Activated CD8-positive, alpha-beta T cell treated with anti-CD3 and anti-CD28 coated beads, Interleukin-2, amount 10 ng/mL, durations not matched to agents 7 days and 5 days (primary cell): ENCODE measurements at regions of chr19 and their contacts with region 1.

Region 1: GRCh38 chr19:45478454-45479238 is 10.8 kb downstream of the FOSB start:
- DNase-seq: peak; percentile 94
- ATAC-seq: peak; percentile 59
- H3K4me3 Mint-ChIP-seq: peak overlapping the region; percentile 53
- H3K27ac Mint-ChIP-seq: peak overlapping the region; percentile 96
- H3K4me1 Mint-ChIP-seq: peaks cover 34% of the 10 kb centered on the region
- H3K27me3 Mint-ChIP-seq: peaks cover 17% of the 10 kb centered on the region

Region 2: DNA sequence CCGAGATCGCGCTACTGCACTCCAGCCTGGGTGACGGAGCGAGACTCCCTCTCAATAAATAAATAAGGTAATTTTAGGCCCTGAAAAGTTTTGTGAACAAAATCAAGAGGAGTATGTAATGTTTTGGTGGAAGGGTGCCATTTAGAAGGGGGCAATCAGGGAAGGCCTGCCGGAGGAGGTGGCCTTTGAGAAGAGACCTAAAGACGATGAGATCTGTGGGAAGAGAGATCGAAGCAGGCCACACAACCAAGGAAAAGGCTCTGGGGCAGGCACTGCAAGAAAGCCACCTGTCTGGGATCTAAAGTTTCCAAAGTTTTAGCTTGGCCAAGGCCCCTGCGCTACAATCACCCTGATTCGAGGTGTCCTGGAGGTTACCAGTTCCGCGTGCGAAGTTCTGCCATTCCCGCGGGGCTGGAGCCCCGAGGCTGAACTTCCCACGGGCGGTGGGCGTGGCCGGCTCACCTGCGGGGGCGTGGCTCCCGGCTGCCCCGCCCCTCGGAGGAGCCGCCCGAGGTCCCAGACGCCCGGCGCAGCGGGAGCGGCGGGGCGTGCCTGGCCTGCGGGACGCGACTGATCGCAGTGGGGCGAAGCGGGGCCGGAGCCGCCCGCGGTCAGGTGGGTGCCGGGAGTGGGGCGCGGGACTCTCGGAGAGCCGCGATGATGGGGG is 138.3 kb before region 1 on chr19 and contains the start of gene KLC3:
- CTCF ChIA-PET with region 1: no interaction called
- POLR2A ChIA-PET with region 1: no interaction called
- DNase-seq: no peak
- ATAC-seq: peak; percentile 58
- H3K4me3 Mint-ChIP-seq: peak within 1 kb of the TSS; percentile 48
- H3K27ac Mint-ChIP-seq: no peak within 1 kb of the TSS
- H3K4me1 Mint-ChIP-seq: peaks cover 10% of the 10 kb centered on the region
- H3K27me3 Mint-ChIP-seq: peaks cover 13% of the 10 kb centered on the region
- total RNA-seq, gene KLC3: not detected

Region 3: DNA sequence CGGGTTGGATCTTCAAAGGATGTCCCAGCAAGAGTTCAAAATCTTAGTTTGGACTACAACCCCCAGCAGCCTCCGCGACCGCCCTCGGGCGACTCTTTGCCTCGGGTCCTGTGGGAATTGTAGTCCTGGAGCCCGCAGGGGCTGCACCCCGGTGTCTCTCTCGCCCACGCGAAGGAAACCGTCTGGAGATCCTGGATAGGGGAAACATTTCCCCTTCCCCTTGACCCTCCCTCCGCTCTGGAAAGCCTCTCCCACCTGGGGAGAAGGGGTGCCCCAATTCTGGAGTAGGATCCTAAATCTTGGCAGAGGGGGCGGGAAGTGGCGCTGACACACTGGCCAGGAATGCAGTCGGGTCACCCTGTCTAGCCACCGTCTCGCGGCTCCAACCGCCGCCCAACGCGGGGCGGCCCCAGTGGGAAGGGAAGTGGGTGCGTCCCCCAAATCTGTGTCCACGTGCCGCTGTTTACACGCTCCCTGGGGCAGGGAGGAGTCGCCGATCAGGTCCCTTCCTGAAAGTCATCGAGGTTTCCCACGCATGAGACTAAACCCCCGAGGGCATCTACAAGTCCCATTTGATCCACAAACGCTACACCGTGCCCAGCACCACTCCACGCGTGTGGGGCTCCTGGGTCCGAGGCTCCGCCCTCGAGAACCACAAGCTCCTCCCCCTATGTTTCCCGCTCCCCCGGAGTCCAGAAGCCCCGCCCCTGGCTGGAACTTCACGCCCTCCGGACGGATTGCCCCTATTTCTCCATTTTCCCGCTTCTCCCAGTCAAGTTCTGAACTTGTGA is 73.0 kb before region 1 on chr19:
- CTCF ChIA-PET with region 1: interaction called, 64 read pairs
- POLR2A ChIA-PET with region 1: interaction called, 4 read pairs
- DNase-seq: peak; percentile 90
- ATAC-seq: peak; percentile 59
- H3K4me3 Mint-ChIP-seq: peak overlapping the region; percentile 96
- H3K27ac Mint-ChIP-seq: peak overlapping the region; percentile 93
- H3K4me1 Mint-ChIP-seq: peaks cover 46% of the 10 kb centered on the region
- H3K27me3 Mint-ChIP-seq: peaks cover 21% of the 10 kb centered on the region

Region 4: DNA sequence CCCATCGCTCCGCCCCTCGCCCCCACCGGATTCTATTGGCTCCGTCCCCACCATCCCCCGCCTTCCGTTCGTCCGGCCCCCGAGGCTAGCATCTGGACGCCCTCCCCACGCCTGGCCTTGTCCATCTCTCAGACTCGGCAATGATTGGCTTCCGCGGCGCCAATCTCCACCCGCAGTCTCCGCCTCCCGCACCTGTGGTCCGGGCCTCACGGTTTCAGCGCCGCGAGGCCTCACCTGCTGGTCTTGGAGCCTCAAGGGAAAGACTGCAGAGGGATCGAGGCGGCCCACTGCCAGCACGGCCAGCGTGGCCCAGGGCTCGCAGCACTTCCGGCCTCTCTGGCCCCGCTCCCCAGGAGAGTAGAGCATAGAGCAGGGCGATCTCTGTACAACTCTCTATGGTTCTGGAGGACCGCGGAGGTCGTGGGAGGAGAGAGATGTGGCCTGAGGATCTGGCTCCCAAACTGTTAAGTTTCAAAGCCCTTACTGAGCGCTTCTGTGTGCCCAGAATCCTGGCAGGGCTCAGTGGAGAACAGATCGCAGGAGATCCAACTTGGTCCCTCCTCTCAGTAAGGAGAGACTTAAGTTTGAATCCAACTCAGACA is 55.0 kb before region 1 on chr19 and contains the start of gene ERCC1:
- CTCF ChIA-PET with region 1: interaction called, 67 read pairs
- POLR2A ChIA-PET with region 1: interaction called, 7 read pairs
- DNase-seq: peak; percentile 95
- ATAC-seq: peak; percentile 73
- H3K4me3 Mint-ChIP-seq: peak within 1 kb of the TSS; percentile 84
- H3K27ac Mint-ChIP-seq: peak within 1 kb of the TSS; percentile 87
- H3K4me1 Mint-ChIP-seq: peaks cover 72% of the 10 kb centered on the region
- H3K27me3 Mint-ChIP-seq: peaks cover 4% of the 10 kb centered on the region
- total RNA-seq, gene ERCC1: 57.5 to 64.8 TPM

Region 5: GRCh38 chr19:45450012-45450333 is 28.7 kb before region 1 on chr19:
- CTCF ChIA-PET with region 1: interaction called, 96 read pairs
- POLR2A ChIA-PET with region 1: interaction called, 7 read pairs
- DNase-seq: no peak
- ATAC-seq: peak; percentile 41
- H3K4me3 Mint-ChIP-seq: peak overlapping the region; percentile 92
- H3K27ac Mint-ChIP-seq: peak overlapping the region; percentile 99
- H3K4me1 Mint-ChIP-seq: peaks cover 52% of the 10 kb centered on the region
- H3K27me3 Mint-ChIP-seq: peaks cover 6% of the 10 kb centered on the region

Region 6: GRCh38 chr19:45462174-45462573 is 16.5 kb before region 1 on chr19:
- CTCF ChIA-PET with region 1: interaction called, 108 read pairs
- POLR2A ChIA-PET with region 1: interaction called, 3 read pairs
- DNase-seq: no peak
- ATAC-seq: no peak
- H3K4me3 Mint-ChIP-seq: no peak overlapping the region
- H3K27ac Mint-ChIP-seq: no peak overlapping the region
- H3K4me1 Mint-ChIP-seq: peaks cover 5% of the 10 kb centered on the region
- H3K27me3 Mint-ChIP-seq: peaks cover 17% of the 10 kb centered on the region

Region 7: DNA sequence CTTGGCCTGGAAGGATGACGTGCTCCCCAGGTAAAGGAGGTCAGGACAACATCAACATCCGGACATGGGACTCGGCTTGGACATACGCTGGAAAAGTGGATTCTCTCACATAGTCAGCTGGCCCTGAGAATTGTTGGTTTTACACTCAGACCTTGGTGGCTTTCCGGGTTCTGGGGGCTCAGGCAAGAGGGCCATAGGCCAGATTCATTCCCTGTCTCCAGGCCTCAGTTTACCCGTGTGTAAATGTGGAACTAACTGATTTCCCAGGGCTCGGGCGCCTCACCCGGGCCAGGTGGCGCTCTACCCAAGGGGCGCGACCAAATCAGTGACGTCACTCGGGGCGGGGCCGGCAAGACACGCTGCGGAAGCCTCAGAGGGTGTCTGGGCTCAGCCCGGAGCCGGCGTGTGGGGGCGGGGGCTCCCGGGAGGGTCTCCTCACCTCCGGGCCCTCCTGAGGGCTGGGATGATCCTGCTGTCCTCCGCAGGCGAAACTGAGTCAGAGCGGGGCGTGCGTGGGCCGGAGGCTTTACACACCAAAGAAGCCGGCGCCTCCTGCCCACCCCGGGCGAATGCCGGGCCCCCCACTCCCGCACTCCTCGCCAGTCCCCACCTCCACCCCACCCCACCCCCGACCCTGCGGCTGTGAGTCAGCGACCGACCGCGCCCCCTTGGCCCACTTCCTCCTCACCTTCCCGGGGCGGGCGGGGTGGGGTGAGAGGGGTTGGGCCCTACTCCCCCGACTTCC is 27.8 kb after region 1 on chr19:
- CTCF ChIA-PET with region 1: interaction called, 15 read pairs
- POLR2A ChIA-PET with region 1: no interaction called
- DNase-seq: peak; percentile 98
- ATAC-seq: peak; percentile 74
- H3K4me3 Mint-ChIP-seq: peak overlapping the region; percentile 88
- H3K27ac Mint-ChIP-seq: peak overlapping the region; percentile 98
- H3K4me1 Mint-ChIP-seq: peaks cover 42% of the 10 kb centered on the region
- H3K27me3 Mint-ChIP-seq: no peaks in the 10 kb centered on the region